Right ventricle myocardium superior (tissue), 1 donor: ENCODE measurements at regions of chr15 and their contacts with region 1.

Region 1: GRCh38 chr15:70362886-70363285 is 265.2 kb upstream of the TLE3 start:
- DNase-seq: peak; percentile 59
- ATAC-seq: peak; percentile 84

Region 2: DNA sequence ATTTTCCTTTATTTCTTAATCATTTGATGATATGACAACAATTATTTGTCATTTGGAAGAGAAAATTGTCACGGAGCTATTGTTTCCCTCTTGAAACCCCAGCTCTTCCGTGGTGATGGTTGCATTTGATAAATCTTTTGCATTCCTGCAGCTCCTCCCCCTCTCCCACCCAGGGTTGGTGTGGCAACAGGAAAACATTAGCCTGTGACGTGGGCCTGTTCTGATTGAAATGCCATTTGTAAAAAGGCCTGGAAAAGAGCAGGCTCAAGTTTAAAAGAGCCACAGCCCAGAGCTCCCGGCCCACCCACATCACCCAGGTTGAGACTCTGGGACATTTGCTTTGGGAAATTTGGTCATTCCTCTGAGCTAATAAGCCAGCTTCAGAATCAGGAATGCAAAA is 627.8 kb before region 1 on chr15:
- intact Hi-C with region 1: loop called (anchors 10 kb)
- DNase-seq: no peak
- ATAC-seq: no peak

Region 3: GRCh38 chr15:69823218-69823907 is 539.5 kb before region 1 on chr15:
- intact Hi-C with region 1: no loop called
- DNase-seq: no peak
- ATAC-seq: no peak